Naive thymus-derived CD4-positive, alpha-beta T cell (primary cell): ENCODE measurements at regions of chr2 and their contacts with region 1.

Region 1: GRCh38 chr2:101697124-101698013 is at the start of gene MAP4K4:
- DNase-seq: peak; percentile 56 to 81 (median 70)
- ATAC-seq: peak; percentile 76
- H3K4me3 ChIP-seq: peak within 1 kb of the TSS; percentile 89
- H3K4me3 Mint-ChIP-seq: peak within 1 kb of the TSS in 6 of 10 donors; percentile 82 to 98 (median 96)
- H3K27ac ChIP-seq: peak within 1 kb of the TSS; percentile 79
- H3K27ac Mint-ChIP-seq: peak within 1 kb of the TSS; percentile 88 to 98 (median 93)
- H3K4me1 ChIP-seq: peaks cover 19 to 21% of the 10 kb centered on the region in 2 donors
- H3K4me1 Mint-ChIP-seq: peaks cover 11 to 41% (median 26%) of the 10 kb centered on the region in 7 donors
- H3K27me3 ChIP-seq: no peaks in the 10 kb centered on the region
- H3K27me3 Mint-ChIP-seq: no peaks in the 10 kb centered on the region
- total RNA-seq, gene MAP4K4: 104 to 138 (median 128) TPM

Region 2: DNA sequence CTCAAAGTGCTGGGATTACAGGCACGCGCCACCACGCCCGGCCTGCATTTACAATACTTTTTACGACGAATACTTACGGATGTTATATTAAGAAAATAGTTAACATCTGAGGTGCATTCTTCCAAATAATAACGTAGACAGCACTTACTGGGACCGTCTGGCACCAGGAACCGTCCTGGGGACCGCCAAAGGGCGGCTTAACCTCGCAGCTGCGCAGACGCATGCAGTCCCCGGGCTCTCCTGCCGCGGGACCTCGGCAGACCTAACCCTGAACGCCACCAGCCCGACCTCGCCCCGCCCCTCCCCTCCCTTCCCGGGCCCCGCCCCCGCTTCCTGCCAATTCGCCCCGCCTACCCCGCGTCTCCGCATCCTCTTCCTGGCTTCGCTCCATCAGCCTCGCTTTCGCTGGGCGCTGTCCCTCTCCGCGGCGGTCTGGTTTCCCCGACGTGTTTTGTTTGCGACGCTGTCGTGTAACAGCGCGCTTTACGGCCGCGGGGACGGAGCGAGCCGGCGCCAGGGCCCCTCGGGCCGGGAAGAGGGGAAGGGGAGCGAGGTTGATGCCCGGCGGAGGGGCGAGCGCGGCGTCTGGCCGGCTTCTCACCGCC is 444.9 kb before region 1 on chr2 and contains the start of gene CNOT11:
- CTCF ChIA-PET with region 1: no interaction called
- POLR2A ChIA-PET with region 1: no interaction called
- intact Hi-C with region 1: loop called in 1 of 2 experiments (anchors 5 kb)
- DNase-seq: peak; percentile 97 to 99 (median 98)
- ATAC-seq: peak; percentile 89
- H3K4me3 ChIP-seq: peak within 1 kb of the TSS; percentile 91
- H3K4me3 Mint-ChIP-seq: peak within 1 kb of the TSS; percentile 91 to 98 (median 96)
- H3K27ac ChIP-seq: peak within 1 kb of the TSS; percentile 99
- H3K27ac Mint-ChIP-seq: peak within 1 kb of the TSS; percentile 92 to 98 (median 96)
- H3K4me1 ChIP-seq: peaks cover 28 to 39% of the 10 kb centered on the region in 2 donors
- H3K4me1 Mint-ChIP-seq: peaks cover 27 to 58% (median 51%) of the 10 kb centered on the region in 7 donors
- H3K27me3 ChIP-seq: no peaks in the 10 kb centered on the region
- H3K27me3 Mint-ChIP-seq: no peaks in the 10 kb centered on the region
- total RNA-seq, gene CNOT11: 49.0 to 65.7 (median 54.3) TPM

Region 3: GRCh38 chr2:101419096-101419663 is 278.2 kb before region 1 on chr2:
- CTCF ChIA-PET with region 1: interaction called, 5 read pairs
- POLR2A ChIA-PET with region 1: interaction called, 5 read pairs
- intact Hi-C with region 1: loop called in 1 of 2 experiments (anchors 1 kb)
- DNase-seq: peak in 8 of 9 donors; percentile 41 to 74 (median 68)
- ATAC-seq: peak; percentile 87
- H3K4me3 ChIP-seq: no peak overlapping the region
- H3K4me3 Mint-ChIP-seq: no peak overlapping the region
- H3K27ac ChIP-seq: no peak overlapping the region
- H3K27ac Mint-ChIP-seq: peak overlapping the region in 1 of 9 donors; percentile 64
- H3K4me1 ChIP-seq: no peaks in the 10 kb centered on the region
- H3K4me1 Mint-ChIP-seq: peaks cover 0 to 5% (median 0%) of the 10 kb centered on the region in 7 donors
- H3K27me3 ChIP-seq: no peaks in the 10 kb centered on the region
- H3K27me3 Mint-ChIP-seq: peaks cover 0 to 6% (median 0%) of the 10 kb centered on the region in 5 donors

Region 4: GRCh38 chr2:101511381-101511780 is 186.0 kb before region 1 on chr2:
- CTCF ChIA-PET with region 1: no interaction called
- POLR2A ChIA-PET with region 1: no interaction called
- intact Hi-C with region 1: no loop called
- DNase-seq: no peak
- ATAC-seq: no peak
- H3K4me3 ChIP-seq: no peak overlapping the region
- H3K4me3 Mint-ChIP-seq: no peak overlapping the region
- H3K27ac ChIP-seq: no peak overlapping the region
- H3K27ac Mint-ChIP-seq: no peak overlapping the region
- H3K4me1 ChIP-seq: no peaks in the 10 kb centered on the region
- H3K4me1 Mint-ChIP-seq: peaks cover 3 to 15% (median 10%) of the 10 kb centered on the region in 7 donors
- H3K27me3 ChIP-seq: no peaks in the 10 kb centered on the region
- H3K27me3 Mint-ChIP-seq: peaks cover 0 to 11% (median 0%) of the 10 kb centered on the region in 5 donors

Region 5: GRCh38 chr2:101569886-101570520 is 127.4 kb before region 1 on chr2:
- CTCF ChIA-PET with region 1: no interaction called
- POLR2A ChIA-PET with region 1: interaction called, 5 read pairs
- intact Hi-C with region 1: loop called (anchors 1 to 2 kb)
- DNase-seq: no peak
- ATAC-seq: no peak
- H3K4me3 ChIP-seq: peak overlapping the region; percentile 12
- H3K4me3 Mint-ChIP-seq: peak overlapping the region; percentile 61 to 90 (median 80)
- H3K27ac ChIP-seq: no peak overlapping the region
- H3K27ac Mint-ChIP-seq: peak overlapping the region; percentile 82 to 96 (median 91)
- H3K4me1 ChIP-seq: peaks cover 10 to 33% of the 10 kb centered on the region in 2 donors
- H3K4me1 Mint-ChIP-seq: peaks cover 16 to 75% (median 62%) of the 10 kb centered on the region in 7 donors
- H3K27me3 ChIP-seq: no peaks in the 10 kb centered on the region
- H3K27me3 Mint-ChIP-seq: peaks cover 0 to 15% (median 0%) of the 10 kb centered on the region in 5 donors

Region 6: DNA sequence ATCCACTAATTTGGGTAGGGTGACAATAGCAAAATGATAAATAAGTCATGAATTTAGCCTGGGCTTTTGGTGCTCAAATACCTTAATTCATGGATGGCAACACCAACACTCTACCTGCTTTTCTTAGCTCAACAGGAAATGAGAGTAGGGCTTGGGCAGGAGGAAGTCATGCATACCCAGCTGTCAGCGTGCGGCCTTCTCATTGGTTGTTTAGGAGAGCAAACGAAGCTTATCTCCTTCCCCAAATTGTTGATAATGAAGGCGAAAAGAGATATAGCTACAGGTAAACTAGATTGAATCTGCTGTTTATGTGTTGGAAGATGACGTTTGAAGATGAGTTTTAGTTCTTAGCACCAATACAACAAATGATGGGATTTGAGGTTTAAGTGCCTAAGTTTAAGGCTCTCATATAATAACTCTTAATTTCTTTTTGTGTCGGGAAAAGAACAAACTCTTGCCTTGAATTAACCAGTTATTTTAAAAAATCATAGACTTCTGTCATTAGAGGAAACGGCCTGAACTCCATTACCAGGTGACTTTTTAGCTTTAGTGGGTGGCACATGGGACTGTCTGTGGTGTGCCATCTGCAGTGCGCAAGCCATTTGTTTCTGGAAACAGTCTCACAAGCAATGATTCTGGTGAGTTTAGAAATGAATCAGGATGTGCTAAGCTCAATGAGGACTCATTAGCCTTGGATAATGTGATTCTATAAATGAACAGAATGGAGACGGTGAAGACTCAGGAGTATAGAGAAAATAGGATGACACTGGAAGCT is 19.9 kb after region 1 on chr2:
- CTCF ChIA-PET with region 1: interaction called, 8 read pairs
- POLR2A ChIA-PET with region 1: interaction called, 47 read pairs
- intact Hi-C with region 1: loop called (anchors 1 to 2 kb)
- DNase-seq: peak in 7 of 9 donors; percentile 58 to 74 (median 65)
- ATAC-seq: peak; percentile 72
- H3K4me3 ChIP-seq: peak overlapping the region; percentile 22
- H3K4me3 Mint-ChIP-seq: peak overlapping the region; percentile 39 to 83 (median 76)
- H3K27ac ChIP-seq: peak overlapping the region; percentile 64
- H3K27ac Mint-ChIP-seq: peak overlapping the region in 8 of 9 donors; percentile 76 to 98 (median 96)
- H3K4me1 ChIP-seq: peaks cover 53 to 74% of the 10 kb centered on the region in 2 donors
- H3K4me1 Mint-ChIP-seq: peaks cover 56 to 92% (median 83%) of the 10 kb centered on the region in 7 donors
- H3K27me3 ChIP-seq: no peaks in the 10 kb centered on the region
- H3K27me3 Mint-ChIP-seq: no peaks in the 10 kb centered on the region

Region 7: DNA sequence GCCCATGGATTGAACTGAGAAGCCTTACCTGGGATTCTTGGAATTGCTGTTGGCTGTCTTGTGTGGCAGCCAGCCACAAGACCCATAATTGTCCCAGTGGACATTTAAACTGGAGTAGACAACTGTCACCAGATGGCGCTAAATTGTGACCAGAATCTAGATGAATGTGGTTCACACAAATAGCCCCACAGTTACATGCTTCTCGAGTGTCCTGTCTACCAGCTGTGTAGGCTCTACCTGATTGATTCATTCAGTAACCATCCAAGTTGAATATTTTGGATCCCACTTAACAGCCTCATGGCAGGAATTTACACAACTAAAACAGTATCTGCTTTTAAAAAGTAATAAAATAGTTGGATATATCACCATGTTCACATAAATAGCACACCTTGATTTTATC is 73.4 kb after region 1 on chr2:
- CTCF ChIA-PET with region 1: interaction called, 6 read pairs
- POLR2A ChIA-PET with region 1: interaction called, 5 read pairs
- intact Hi-C with region 1: loop called in 1 of 2 experiments (anchors 2 kb)
- DNase-seq: no peak
- ATAC-seq: peak; percentile 48
- H3K4me3 ChIP-seq: no peak overlapping the region
- H3K4me3 Mint-ChIP-seq: peak overlapping the region in 8 of 10 donors; percentile 48 to 79 (median 73)
- H3K27ac ChIP-seq: no peak overlapping the region
- H3K27ac Mint-ChIP-seq: peak overlapping the region in 7 of 9 donors; percentile 14 to 90 (median 59)
- H3K4me1 ChIP-seq: peaks cover 20 to 79% of the 10 kb centered on the region in 2 donors
- H3K4me1 Mint-ChIP-seq: peaks cover 73 to 98% (median 95%) of the 10 kb centered on the region in 7 donors
- H3K27me3 ChIP-seq: no peaks in the 10 kb centered on the region
- H3K27me3 Mint-ChIP-seq: no peaks in the 10 kb centered on the region